ENCODE measurements at regions of chr18 and their contacts with region 1.

Region 1: DNA sequence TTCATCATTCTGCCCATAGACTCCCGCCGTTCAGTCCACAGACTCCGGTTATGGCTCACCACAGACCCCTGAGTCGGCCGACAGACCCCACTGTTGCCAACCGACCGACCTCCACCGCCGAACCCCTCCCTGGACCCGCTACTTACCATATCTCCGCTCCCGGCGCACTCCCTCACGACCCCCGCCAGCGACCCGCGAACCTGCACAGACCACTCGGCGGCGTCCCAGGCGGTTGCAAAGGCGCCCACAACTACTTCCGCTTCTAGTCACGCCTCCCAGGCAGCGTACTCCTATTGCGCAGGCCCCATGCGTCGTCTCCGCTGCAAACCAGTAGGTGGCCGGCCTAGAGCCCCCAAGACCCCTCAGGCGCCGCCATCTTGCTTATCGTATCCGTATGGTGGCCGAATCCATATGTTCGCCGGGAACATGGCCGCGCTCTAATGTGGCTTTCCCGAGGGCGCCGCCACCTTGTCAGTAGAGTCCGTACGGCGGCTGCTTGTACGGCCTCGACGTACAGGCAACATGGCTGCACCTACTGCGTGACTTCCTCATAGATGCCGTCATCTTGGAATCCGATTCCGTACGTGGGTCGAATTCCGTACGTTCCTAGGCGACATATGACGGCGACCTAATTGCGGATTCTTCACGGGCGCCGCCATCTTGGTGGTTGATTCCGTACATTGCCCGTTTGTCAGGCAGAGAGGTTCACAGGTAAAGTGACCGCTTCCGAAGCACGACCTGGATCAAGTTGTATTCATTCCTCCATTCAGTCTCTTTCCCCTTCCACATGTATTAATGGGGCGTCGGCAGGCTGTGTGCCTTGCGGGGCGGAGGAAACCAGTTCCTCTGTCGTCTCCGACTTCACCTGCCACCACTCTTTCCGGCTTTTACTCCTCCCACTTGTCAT is at the start of gene CXXC1:
- DNase-seq: peak; percentile 94 to 99
- H3K4me3 ChIP-seq: peak within 1 kb of the TSS; percentile 68 to 80
- H3K27ac ChIP-seq: peak within 1 kb of the TSS; percentile 83 to 88
- H3K4me1 ChIP-seq: no peaks in the 10 kb centered on the region
- H3K27me3 ChIP-seq: no peaks in the 10 kb centered on the region
- CTCF ChIP-seq: peak; percentile 35 to 69 (median 46)
- total RNA-seq, gene CXXC1: 171 TPM

Region 2: DNA sequence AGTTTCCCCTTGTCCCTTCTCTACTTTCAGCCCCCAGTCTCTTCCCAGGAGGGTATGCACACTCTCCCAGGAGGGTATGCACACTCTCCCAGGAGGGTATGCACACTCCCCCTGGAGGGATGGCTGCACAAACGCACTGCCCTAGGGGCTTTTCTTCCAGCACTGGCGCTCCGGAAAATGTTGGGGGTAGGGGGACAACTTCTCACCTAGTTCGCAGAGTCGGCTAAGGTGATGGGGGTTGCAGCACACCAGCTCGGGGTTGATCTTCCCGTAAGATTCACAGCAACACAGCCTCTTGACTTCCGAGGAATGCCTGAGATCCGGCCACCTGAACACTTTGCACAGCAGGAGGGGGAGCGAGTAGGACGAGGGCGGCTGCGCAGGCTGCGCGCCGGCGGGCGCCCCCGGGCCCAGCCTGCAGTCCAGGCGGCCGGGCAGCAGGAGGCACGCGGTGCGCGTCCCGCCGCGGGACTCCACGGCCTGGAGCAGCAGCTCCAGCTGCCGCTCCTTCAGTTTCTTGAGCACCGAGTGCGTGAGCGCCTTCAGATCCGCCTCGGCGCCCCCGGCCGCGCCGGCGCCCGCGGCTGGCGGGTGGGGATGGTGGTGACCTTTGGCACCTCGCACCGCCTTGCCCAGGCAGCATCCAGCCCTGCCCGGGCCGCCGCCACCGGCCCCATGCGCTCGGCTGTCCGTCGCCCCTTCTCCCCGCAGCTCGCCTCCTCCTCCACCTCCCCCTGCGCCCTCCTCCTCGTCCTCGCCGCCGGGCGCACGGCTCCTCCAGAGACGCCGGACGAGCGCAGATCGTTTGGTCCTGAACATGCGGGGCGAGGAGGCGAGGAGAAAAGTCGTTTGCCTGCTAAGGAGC is 1337.9 kb before region 1 on chr18:
- intact Hi-C with region 1: no loop called
- DNase-seq: no peak
- H3K4me3 ChIP-seq: peak overlapping the region; percentile 88 to 94
- H3K27ac ChIP-seq: peak overlapping the region; percentile 97 to 99
- H3K4me1 ChIP-seq: peaks cover 9 to 29% of the 10 kb centered on the region in 2 donors
- H3K27me3 ChIP-seq: no peaks in the 10 kb centered on the region
- CTCF ChIP-seq: no peak

Region 3: DNA sequence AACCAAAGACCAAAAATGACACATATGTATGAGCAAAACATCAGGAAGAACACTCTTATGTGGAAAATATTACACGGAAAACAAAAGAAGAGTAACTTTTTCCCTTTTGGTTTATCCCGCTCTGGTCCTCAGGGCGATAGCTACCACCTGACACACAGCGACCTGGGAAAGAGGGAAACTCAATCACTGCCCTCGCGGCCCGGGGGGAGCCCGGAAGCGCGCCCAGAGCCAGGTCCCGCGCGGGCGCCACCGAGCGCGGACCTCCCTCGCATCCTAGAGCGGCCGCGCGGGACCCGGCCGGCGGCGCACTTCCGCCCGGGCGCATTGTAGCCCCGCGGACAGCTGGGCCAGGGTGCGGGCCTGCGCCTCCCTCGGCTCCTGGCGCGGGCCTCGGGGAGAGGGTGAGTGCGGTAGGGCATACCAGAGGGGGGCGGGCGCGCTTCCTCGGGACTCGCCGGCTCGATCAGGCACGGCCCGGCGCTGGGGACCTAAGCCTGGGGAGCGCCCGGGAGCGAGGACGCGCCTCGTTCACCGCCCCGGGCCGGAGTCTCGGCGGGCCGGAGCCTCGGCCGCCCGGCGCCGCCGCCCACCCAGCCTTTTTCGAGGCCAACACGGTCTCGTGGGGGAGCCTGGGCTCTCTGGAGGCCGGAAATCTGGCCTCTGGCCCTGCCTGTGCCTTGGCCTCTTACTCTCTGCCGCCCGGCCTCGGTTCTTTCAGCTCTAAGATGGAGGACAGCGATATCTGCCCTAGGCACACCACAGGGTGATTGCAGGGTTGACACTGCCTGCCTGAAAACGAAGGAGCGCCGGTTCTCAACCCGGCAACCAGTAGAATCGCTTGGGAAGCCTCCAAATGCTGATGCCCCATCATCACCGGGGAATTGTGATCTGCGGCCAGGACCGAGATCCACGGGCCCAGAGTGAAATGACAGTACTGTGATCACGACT is 680.3 kb after region 1 on chr18 and contains the start of gene ELAC1:
- intact Hi-C with region 1: loop called (anchors 5 kb)
- DNase-seq: peak; percentile 10 to 87
- H3K4me3 ChIP-seq: peak within 1 kb of the TSS; percentile 87 to 89
- H3K27ac ChIP-seq: peak within 1 kb of the TSS; percentile 96 to 98
- H3K4me1 ChIP-seq: peaks cover 0 to 7% of the 10 kb centered on the region in 2 donors
- H3K27me3 ChIP-seq: no peaks in the 10 kb centered on the region
- CTCF ChIP-seq: no peak
- total RNA-seq, gene ELAC1: not detected

Measured in ascending aorta (tissue), 2 donors.